ENCODE measurements at regions of chr3 and their contacts with region 1.

Region 1: DNA sequence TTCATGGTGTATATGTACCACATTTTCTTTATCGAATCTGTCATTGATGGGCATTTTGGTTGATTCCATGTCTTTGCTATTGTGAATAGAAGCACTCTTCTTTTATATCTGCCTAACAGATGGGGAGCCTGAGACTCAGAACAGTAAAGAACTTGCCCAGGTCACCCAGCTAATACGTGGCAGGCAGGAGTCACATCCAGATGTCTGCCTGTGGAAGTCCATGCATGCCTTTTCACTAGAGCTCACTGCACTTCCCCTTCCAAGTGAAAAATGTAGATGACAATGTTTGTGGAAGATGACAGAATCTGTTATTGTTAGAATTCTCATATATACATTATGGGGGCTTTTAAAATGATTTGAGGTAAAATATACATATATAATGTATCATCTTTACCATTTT is 165.0 kb downstream of the PDZRN3 start:
- DNase-seq: no peak
- H3K4me3 ChIP-seq: no peak overlapping the region
- H3K27ac ChIP-seq: no peak overlapping the region
- H3K4me1 ChIP-seq: no peaks in the 10 kb centered on the region
- H3K27me3 ChIP-seq: no peaks in the 10 kb centered on the region
- CTCF ChIP-seq: no peak
- POLR2A ChIP-seq: no peak

Region 2: GRCh38 chr3:73502609-73503583 is 43.2 kb after region 1 on chr3:
- intact Hi-C with region 1: loop called (anchors 5 kb)
- DNase-seq: peak; percentile 75 to 76
- H3K4me3 ChIP-seq: no peak overlapping the region
- H3K27ac ChIP-seq: no peak overlapping the region
- H3K4me1 ChIP-seq: no peaks in the 10 kb centered on the region
- H3K27me3 ChIP-seq: no peaks in the 10 kb centered on the region
- CTCF ChIP-seq: peak; percentile 69 to 89 (median 84)
- POLR2A ChIP-seq: no peak

Region 3: DNA sequence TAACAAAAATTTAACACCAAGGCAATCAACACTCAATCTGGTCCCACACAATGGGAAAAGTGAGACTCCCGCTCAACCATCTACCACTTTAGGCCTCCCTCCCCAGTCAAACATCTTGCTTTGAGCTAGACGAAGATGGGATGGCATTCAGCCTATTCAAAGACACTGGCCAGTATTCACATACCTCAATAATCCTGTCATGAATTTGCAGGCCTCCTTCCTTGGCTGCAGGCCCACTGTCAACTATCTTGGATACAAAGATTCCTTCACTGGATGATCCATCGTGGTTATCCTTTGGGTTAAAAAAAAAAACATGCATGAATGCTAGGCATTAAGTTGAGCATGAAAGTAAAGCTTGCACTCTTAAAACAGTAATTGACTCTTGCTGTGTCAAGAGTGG is 142.5 kb after region 1 on chr3:
- intact Hi-C with region 1: no loop called
- DNase-seq: no peak
- H3K4me3 ChIP-seq: no peak overlapping the region
- H3K27ac ChIP-seq: no peak overlapping the region
- H3K4me1 ChIP-seq: no peaks in the 10 kb centered on the region
- H3K27me3 ChIP-seq: no peaks in the 10 kb centered on the region
- CTCF ChIP-seq: no peak
- POLR2A ChIP-seq: no peak

Measured in thyroid gland (tissue), 4 donors.